ENCODE measurements at regions of chr7 and their contacts with region 1.

Region 1: GRCh38 chr7:142782922-142783900 is 12.4 kb downstream of the PRSS2 start:
- DNase-seq: peak; percentile 90
- H3K4me3 ChIP-seq: peak overlapping the region; percentile 38 to 52
- H3K27ac ChIP-seq: no peak overlapping the region
- H3K4me1 ChIP-seq: no peaks in the 10 kb centered on the region; a peak in 1 of 4 replicates
- H3K27me3 ChIP-seq: 0 out of 2 replicates have a peak, but pooled peaks cover 3% of the 10 kb centered on the region
- CTCF ChIP-seq: peak; percentile 99
- EP300 ChIP-seq: peak in 1 of 2 experiments; percentile 40; a peak in 1 of 4 replicates
- RAD21 ChIP-seq: peak; percentile 100

Region 2: GRCh38 chr7:142508258-142508689 is 274.9 kb before region 1 on chr7:
- CTCF ChIA-PET with region 1: interaction called, 16 read pairs
- POLR2A ChIA-PET with region 1: no interaction called
- DNase-seq: no peak
- H3K4me3 ChIP-seq: no peak overlapping the region
- H3K27ac ChIP-seq: no peak overlapping the region
- H3K4me1 ChIP-seq: no peaks in the 10 kb centered on the region
- H3K27me3 ChIP-seq: peaks cover 62% of the 10 kb centered on the region
- CTCF ChIP-seq: no peak
- EP300 ChIP-seq: no peak
- RAD21 ChIP-seq: no peak

Region 3: GRCh38 chr7:142598297-142598696 is 184.9 kb before region 1 on chr7:
- CTCF ChIA-PET with region 1: interaction called, 417 read pairs
- POLR2A ChIA-PET with region 1: interaction called, 3 read pairs
- DNase-seq: no peak
- H3K4me3 ChIP-seq: no peak overlapping the region
- H3K27ac ChIP-seq: no peak overlapping the region
- H3K4me1 ChIP-seq: peaks cover 0 to 8% of the 10 kb centered on the region in 2 experiments; a peak in 1 of 4 replicates
- H3K27me3 ChIP-seq: peaks cover 12% of the 10 kb centered on the region; the same call in 1 of the 2 replicates
- CTCF ChIP-seq: no peak
- EP300 ChIP-seq: no peak
- RAD21 ChIP-seq: no peak

Region 4: DNA sequence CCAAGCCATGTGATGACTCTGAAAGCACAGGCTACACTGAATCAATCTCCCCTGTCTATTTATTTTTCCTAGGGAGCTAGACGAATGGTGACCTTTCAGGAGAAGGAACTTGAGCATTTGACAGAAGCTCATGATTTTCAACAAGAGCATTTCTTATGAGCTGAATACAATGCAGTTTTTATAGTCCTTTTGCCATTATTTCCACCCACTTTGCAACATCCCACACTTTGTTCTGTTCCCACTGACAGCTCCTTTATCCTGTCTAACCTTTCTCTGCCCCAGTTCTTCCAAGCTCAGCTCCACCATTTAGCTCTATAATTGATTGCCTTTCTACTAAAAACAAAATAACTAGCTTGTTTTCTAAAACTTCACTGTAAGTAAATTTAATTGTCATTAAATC is 125.8 kb before region 1 on chr7:
- CTCF ChIA-PET with region 1: interaction called, 19 read pairs
- POLR2A ChIA-PET with region 1: no interaction called
- DNase-seq: no peak
- H3K4me3 ChIP-seq: no peak overlapping the region
- H3K27ac ChIP-seq: no peak overlapping the region
- H3K4me1 ChIP-seq: no peaks in the 10 kb centered on the region; a peak in 1 of 4 replicates
- H3K27me3 ChIP-seq: peaks cover 10% of the 10 kb centered on the region; the same call in 1 of the 2 replicates
- CTCF ChIP-seq: no peak
- EP300 ChIP-seq: no peak
- RAD21 ChIP-seq: no peak

Region 5: DNA sequence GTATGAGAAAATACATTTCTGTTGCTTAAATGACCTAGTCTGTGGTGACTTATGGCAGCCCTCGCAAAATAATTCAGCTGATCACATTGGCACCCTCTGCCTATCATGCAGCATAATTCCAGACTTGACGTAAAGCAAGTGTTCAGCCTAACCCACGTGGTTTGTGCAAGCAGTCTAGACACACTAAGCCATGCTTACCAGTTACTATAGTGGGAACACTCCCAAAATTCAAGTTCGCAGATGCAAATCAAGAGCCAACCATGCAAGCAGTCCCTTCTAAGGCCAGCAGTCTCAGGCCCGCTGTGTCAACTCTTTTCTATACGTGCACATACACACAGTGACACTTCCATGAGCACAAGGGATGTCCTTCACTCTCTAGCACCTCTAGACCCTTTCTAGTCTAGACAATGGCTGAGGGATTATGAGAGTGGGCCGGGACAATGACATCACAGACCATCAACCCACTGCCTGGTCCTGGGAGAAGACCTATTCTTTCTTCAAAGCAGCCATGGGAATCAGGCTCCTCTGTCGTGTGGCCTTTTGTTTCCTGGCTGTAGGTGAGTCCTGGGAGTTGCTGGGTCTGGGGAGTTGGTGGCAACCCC is 62.9 kb before region 1 on chr7:
- CTCF ChIA-PET with region 1: interaction called, 76 read pairs
- POLR2A ChIA-PET with region 1: no interaction called
- DNase-seq: no peak
- H3K4me3 ChIP-seq: no peak overlapping the region
- H3K27ac ChIP-seq: no peak overlapping the region
- H3K4me1 ChIP-seq: peaks cover 0 to 5% of the 10 kb centered on the region in 2 experiments; a peak in 1 of 4 replicates
- H3K27me3 ChIP-seq: peaks cover 6% of the 10 kb centered on the region; the same call in 1 of the 2 replicates
- CTCF ChIP-seq: no peak
- EP300 ChIP-seq: no peak
- RAD21 ChIP-seq: no peak

Region 6: GRCh38 chr7:142796608-142797385 is 13.6 kb after region 1 on chr7:
- CTCF ChIA-PET with region 1: interaction called, 39 read pairs
- POLR2A ChIA-PET with region 1: no interaction called
- DNase-seq: peak; percentile 75
- H3K4me3 ChIP-seq: peak overlapping the region in 1 of 2 experiments; percentile 28; a peak in 1 of 4 replicates
- H3K27ac ChIP-seq: no peak overlapping the region
- H3K4me1 ChIP-seq: peaks cover 0 to 9% of the 10 kb centered on the region in 2 experiments; a peak in 1 of 4 replicates
- H3K27me3 ChIP-seq: peaks cover 61% of the 10 kb centered on the region
- CTCF ChIP-seq: no peak
- EP300 ChIP-seq: no peak
- RAD21 ChIP-seq: no peak

Measured in SK-N-SH (cell line).